CD8-positive, alpha-beta T cell (primary cell): ENCODE measurements at regions of chr10 and their contacts with region 1.

Region 1: GRCh38 chr10:73940634-73941221 is 29.8 kb downstream of the PLAU start:
- DNase-seq: peak; percentile 71 to 91 (median 81)
- ATAC-seq: peak; percentile 100
- H3K4me3 ChIP-seq: no peak overlapping the region
- H3K4me3 Mint-ChIP-seq: peak overlapping the region; percentile 37
- H3K27ac ChIP-seq: no peak overlapping the region
- H3K27ac Mint-ChIP-seq: no peak overlapping the region
- H3K4me1 ChIP-seq: peaks cover 4% of the 10 kb centered on the region
- H3K4me1 Mint-ChIP-seq: peaks cover 6% of the 10 kb centered on the region
- H3K27me3 ChIP-seq: no peaks in the 10 kb centered on the region
- H3K27me3 Mint-ChIP-seq: no peaks in the 10 kb centered on the region
- CTCF ChIP-seq: peak; percentile 95

Region 2: GRCh38 chr10:72273410-72274212 is 1667.1 kb before region 1 on chr10 and contains the start of gene DDIT4:
- CTCF ChIA-PET with region 1: no interaction called
- POLR2A ChIA-PET with region 1: no interaction called
- intact Hi-C with region 1: no loop called
- DNase-seq: peak; percentile 94 to 99 (median 97)
- ATAC-seq: peak; percentile 94
- H3K4me3 ChIP-seq: peak within 1 kb of the TSS; percentile 69 to 99
- H3K4me3 Mint-ChIP-seq: peak within 1 kb of the TSS; percentile 98
- H3K27ac ChIP-seq: peak within 1 kb of the TSS; percentile 82 to 83
- H3K27ac Mint-ChIP-seq: peak within 1 kb of the TSS; percentile 93
- H3K4me1 ChIP-seq: peaks cover 30% of the 10 kb centered on the region
- H3K4me1 Mint-ChIP-seq: peaks cover 52% of the 10 kb centered on the region
- H3K27me3 ChIP-seq: no peaks in the 10 kb centered on the region
- H3K27me3 Mint-ChIP-seq: no peaks in the 10 kb centered on the region
- CTCF ChIP-seq: no peak
- total RNA-seq, gene DDIT4: 351 to 360 TPM

Region 3: DNA sequence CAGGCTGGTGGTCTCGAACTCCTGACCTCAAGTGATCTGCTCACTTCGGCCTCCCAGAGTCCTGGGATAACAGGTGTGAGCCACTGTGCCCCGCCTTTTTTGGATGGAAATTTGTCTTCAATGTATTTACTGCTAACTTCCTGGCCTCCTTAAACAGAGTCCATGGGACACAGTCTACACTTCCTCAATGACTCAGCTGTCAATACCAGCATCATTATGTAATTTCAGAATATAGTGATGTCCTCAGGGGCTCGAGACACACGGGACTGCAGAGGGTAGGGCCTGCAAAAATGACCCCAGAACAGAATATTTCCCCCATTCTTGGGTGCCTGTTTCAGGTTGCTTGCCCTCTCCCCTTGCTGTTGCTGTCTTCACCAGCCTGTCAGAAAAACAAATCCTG is 97.5 kb before region 1 on chr10:
- CTCF ChIA-PET with region 1: interaction called, 95 read pairs
- POLR2A ChIA-PET with region 1: no interaction called
- intact Hi-C with region 1: no loop called
- DNase-seq: no peak
- ATAC-seq: no peak
- H3K4me3 ChIP-seq: no peak overlapping the region
- H3K4me3 Mint-ChIP-seq: no peak overlapping the region
- H3K27ac ChIP-seq: no peak overlapping the region
- H3K27ac Mint-ChIP-seq: no peak overlapping the region
- H3K4me1 ChIP-seq: no peaks in the 10 kb centered on the region
- H3K4me1 Mint-ChIP-seq: no peaks in the 10 kb centered on the region
- H3K27me3 ChIP-seq: no peaks in the 10 kb centered on the region
- H3K27me3 Mint-ChIP-seq: no peaks in the 10 kb centered on the region
- CTCF ChIP-seq: no peak

Region 4: GRCh38 chr10:73879296-73880173 is 61.2 kb before region 1 on chr10:
- CTCF ChIA-PET with region 1: interaction called, 618 read pairs
- POLR2A ChIA-PET with region 1: interaction called, 13 read pairs
- intact Hi-C with region 1: no loop called
- DNase-seq: peak; percentile 86 to 98 (median 95)
- ATAC-seq: peak; percentile 85
- H3K4me3 ChIP-seq: no peak overlapping the region
- H3K4me3 Mint-ChIP-seq: no peak overlapping the region
- H3K27ac ChIP-seq: peak overlapping the region; percentile 19 to 29
- H3K27ac Mint-ChIP-seq: peak overlapping the region; percentile 90
- H3K4me1 ChIP-seq: peaks cover 31% of the 10 kb centered on the region
- H3K4me1 Mint-ChIP-seq: peaks cover 42% of the 10 kb centered on the region
- H3K27me3 ChIP-seq: no peaks in the 10 kb centered on the region
- H3K27me3 Mint-ChIP-seq: no peaks in the 10 kb centered on the region
- CTCF ChIP-seq: peak; percentile 85

Region 5: DNA sequence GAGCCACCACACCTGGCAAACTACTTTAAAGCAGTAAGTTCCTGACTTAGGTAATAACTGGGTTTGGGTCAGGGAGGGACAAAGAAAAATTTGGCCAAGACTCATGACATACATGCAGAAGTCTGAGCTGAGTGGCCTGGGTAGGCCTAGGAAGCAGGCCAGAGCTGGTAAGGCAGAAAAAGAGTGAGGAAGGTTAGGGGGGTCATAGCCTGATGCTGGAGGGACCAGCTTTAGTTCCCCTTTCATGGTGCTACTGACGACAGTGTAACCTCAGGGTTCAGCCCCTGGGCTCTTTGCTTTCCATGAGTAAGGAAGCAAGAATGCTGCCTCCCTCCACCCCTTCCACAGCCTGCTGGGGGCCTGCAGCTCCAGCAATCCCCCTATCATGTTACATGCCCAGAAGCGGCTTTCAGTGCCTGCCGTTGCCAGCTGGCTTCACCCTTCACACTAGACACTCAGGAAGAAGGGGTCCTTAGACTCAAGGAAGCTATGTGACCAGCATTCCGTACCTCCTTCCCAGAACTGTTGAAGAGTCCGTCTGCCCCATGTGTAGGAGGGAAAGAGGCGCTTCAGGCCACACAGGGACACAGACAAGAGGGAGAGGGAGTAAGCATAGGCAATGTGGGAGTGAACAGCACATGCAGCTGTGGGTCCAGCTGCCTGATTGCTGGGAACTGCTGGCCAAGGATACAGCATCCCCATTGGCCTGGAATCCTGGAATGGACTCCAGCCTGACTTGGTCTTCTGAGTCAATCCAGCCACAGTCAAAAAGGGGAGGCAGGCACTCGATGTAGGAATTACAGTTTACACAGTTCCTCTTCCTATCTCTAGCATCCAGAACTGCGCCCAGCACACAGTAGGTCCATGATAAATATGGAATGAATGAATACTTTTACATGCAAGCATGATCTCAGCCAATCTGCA is 33.9 kb before region 1 on chr10:
- CTCF ChIA-PET with region 1: interaction called, 12 read pairs
- POLR2A ChIA-PET with region 1: no interaction called
- intact Hi-C with region 1: no loop called
- DNase-seq: no peak
- ATAC-seq: no peak
- H3K4me3 ChIP-seq: no peak overlapping the region
- H3K4me3 Mint-ChIP-seq: no peak overlapping the region
- H3K27ac ChIP-seq: no peak overlapping the region
- H3K27ac Mint-ChIP-seq: no peak overlapping the region
- H3K4me1 ChIP-seq: peaks cover 27% of the 10 kb centered on the region
- H3K4me1 Mint-ChIP-seq: peaks cover 29% of the 10 kb centered on the region
- H3K27me3 ChIP-seq: peaks cover 17 to 18% of the 10 kb centered on the region in 2 experiments
- H3K27me3 Mint-ChIP-seq: peaks cover 53% of the 10 kb centered on the region
- CTCF ChIP-seq: no peak

Region 6: DNA sequence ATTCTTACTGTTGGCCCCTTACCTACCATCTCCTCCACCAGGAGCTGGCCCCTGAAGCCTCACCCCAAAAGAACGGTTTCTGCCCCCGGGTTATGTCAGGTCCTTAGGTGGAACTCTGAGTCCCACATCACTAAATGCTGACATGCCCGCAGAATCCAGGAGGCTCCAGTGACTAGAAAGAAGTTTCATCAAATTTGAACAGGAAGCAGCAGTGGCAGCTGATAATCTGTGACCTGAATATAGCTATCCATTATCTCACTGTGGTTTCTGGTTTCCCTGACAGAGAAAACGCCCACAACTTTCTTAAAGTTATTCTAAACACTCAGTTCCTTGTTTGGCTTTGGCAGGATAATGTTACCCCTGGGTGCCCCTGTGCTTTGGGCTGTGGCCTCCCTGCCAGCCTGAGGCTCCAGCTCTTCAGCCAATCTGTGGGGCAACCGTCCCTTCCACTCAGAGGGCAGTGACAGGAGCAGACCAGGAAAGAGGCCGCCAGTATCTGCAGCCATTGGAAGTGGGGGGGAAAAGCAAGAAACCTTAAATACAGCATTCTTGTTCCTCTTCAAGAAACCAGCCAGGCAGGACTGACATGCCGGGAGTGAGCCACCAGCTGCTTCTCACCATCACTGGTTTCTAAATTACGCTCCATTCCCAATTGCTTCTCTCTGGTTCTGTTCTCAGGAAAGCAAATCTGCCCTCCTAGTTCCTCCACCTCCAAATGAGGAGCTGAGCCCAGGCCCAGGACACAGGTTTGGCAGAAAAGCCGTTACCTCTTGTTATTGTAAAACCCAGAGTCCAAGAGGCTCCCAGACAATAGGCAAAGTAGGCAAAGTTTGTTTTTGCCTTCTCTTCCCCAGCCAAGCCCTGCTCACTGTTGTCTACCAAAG is 16.0 kb after region 1 on chr10:
- CTCF ChIA-PET with region 1: interaction called, 14 read pairs
- POLR2A ChIA-PET with region 1: interaction called, 6 read pairs
- intact Hi-C with region 1: no loop called
- DNase-seq: peak in 6 of 9 experiments; percentile 12 to 77 (median 36)
- ATAC-seq: peak; percentile 80
- H3K4me3 ChIP-seq: peak overlapping the region; percentile 3 to 26
- H3K4me3 Mint-ChIP-seq: peak overlapping the region; percentile 64
- H3K27ac ChIP-seq: peak overlapping the region in 1 of 2 experiments; percentile 72
- H3K27ac Mint-ChIP-seq: peak overlapping the region; percentile 86
- H3K4me1 ChIP-seq: peaks cover 27% of the 10 kb centered on the region
- H3K4me1 Mint-ChIP-seq: peaks cover 43% of the 10 kb centered on the region
- H3K27me3 ChIP-seq: no peaks in the 10 kb centered on the region
- H3K27me3 Mint-ChIP-seq: no peaks in the 10 kb centered on the region
- CTCF ChIP-seq: no peak

Region 7: GRCh38 chr10:73997787-73998622 is 57.3 kb after region 1 on chr10 and contains the start of gene VCL:
- CTCF ChIA-PET with region 1: interaction called, 10 read pairs
- POLR2A ChIA-PET with region 1: no interaction called
- intact Hi-C with region 1: no loop called
- DNase-seq: peak; percentile 91 to 97 (median 95)
- ATAC-seq: peak; percentile 96
- H3K4me3 ChIP-seq: peak within 1 kb of the TSS; percentile 82
- H3K4me3 Mint-ChIP-seq: peak within 1 kb of the TSS; percentile 100
- H3K27ac ChIP-seq: peak within 1 kb of the TSS; percentile 63
- H3K27ac Mint-ChIP-seq: peak within 1 kb of the TSS; percentile 96
- H3K4me1 ChIP-seq: peaks cover 32% of the 10 kb centered on the region
- H3K4me1 Mint-ChIP-seq: peaks cover 45% of the 10 kb centered on the region
- H3K27me3 ChIP-seq: no peaks in the 10 kb centered on the region
- H3K27me3 Mint-ChIP-seq: no peaks in the 10 kb centered on the region
- CTCF ChIP-seq: no peak
- total RNA-seq, gene VCL: 6.6 to 9.4 TPM

Region 8: GRCh38 chr10:74075906-74076305 is 135.2 kb after region 1 on chr10:
- CTCF ChIA-PET with region 1: interaction called, 24 read pairs
- POLR2A ChIA-PET with region 1: no interaction called
- intact Hi-C with region 1: loop called in 1 of 2 experiments (anchors 5 kb)
- DNase-seq: no peak
- ATAC-seq: no peak
- H3K4me3 ChIP-seq: no peak overlapping the region
- H3K4me3 Mint-ChIP-seq: no peak overlapping the region
- H3K27ac ChIP-seq: no peak overlapping the region
- H3K27ac Mint-ChIP-seq: no peak overlapping the region
- H3K4me1 ChIP-seq: peaks cover 4% of the 10 kb centered on the region
- H3K4me1 Mint-ChIP-seq: peaks cover 14% of the 10 kb centered on the region
- H3K27me3 ChIP-seq: no peaks in the 10 kb centered on the region
- H3K27me3 Mint-ChIP-seq: no peaks in the 10 kb centered on the region
- CTCF ChIP-seq: no peak

Region 9: GRCh38 chr10:74213571-74214162 is 272.9 kb after region 1 on chr10:
- CTCF ChIA-PET with region 1: no interaction called
- POLR2A ChIA-PET with region 1: no interaction called
- intact Hi-C with region 1: no loop called
- DNase-seq: peak; percentile 20 to 70 (median 56)
- ATAC-seq: peak; percentile 46
- H3K4me3 ChIP-seq: no peak overlapping the region
- H3K4me3 Mint-ChIP-seq: no peak overlapping the region
- H3K27ac ChIP-seq: no peak overlapping the region
- H3K27ac Mint-ChIP-seq: no peak overlapping the region
- H3K4me1 ChIP-seq: no peaks in the 10 kb centered on the region
- H3K4me1 Mint-ChIP-seq: peaks cover 20% of the 10 kb centered on the region
- H3K27me3 ChIP-seq: no peaks in the 10 kb centered on the region
- H3K27me3 Mint-ChIP-seq: no peaks in the 10 kb centered on the region
- CTCF ChIP-seq: peak; percentile 51